ENCODE measurements at regions of chr12 and their contacts with region 1.

Region 1: GRCh38 chr12:64256166-64256800 is 34.2 kb upstream of the KICS2 start:
- DNase-seq: no peak

Region 2: GRCh38 chr12:64181504-64182291 is 74.6 kb before region 1 on chr12:
- intact Hi-C with region 1: loop called (anchors 5 kb)
- DNase-seq: peak in 7 of 10 donors; percentile 32 to 86 (median 54)

Region 3: DNA sequence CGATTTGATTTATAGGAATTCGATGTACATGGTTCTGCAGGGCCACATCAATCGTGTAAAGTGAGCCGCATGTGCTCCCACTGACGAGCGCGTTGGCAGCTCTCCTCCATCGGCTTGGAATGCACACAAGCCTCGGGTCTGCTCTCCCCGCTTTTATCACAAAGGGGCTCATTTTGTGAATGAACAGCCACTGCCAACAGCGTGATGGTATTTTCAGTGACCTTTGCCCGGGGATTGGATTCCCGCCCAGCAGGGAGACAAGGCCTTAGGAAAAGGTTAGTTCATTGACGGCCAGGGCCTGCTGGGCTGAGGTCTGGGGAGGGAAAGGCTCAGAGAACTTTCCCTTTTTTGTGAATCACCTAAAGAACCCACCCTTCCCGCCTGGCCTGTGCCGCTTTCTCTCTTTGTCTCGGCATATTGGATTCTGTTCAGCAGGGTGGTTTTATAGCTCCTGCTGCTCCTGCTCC is 1254.3 kb after region 1 on chr12:
- intact Hi-C with region 1: no loop called
- DNase-seq: peak; percentile 16 to 88 (median 45)

Measured in posterior cingulate gyrus (tissue), 11 donors.